AG04449 (cell line): ENCODE measurements at regions of chr3 and their contacts with region 1.

Region 1: DNA sequence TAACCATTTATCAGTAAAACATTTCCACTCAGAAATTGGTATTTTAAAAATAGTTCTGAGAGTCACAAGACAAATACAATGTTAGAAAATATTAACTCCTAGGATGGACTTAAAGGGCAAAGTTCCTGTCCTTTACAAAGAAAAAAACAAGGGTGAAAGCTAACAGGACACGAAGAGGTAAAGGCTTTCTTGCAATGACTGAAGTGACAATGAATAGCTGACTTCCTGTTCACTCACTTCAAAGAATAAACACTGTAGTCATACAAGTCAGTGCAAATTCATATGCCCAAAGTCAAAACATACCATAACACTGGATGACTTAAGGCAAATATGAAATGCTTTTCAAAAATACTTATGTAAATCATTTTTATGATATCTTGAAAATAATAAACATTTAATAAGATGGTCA is 1389.8 kb upstream of the ALCAM start:
- DNase-seq: no peak
- H3K4me3 ChIP-seq: no peak overlapping the region
- CTCF ChIP-seq: no peak

Region 2: DNA sequence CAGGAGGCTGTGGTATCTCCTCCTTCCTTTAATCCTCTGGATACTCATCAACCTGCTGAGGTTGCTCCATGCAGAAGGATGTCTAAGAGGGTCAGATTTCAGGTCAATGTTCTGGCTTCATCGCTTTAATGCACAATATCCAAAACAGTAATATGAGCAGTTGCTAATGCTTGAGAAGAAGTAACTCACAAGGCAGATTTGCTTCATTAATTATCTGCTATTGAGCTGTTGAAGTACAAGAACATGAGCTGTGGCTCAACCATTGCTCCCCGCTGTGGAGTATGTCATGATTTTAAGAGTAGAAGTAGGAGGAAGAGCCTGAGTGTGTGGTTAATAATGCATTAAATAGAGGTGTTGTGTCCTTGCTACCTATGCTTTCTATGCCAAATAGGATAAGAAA is 23.1 kb before region 1 on chr3:
- CTCF ChIA-PET with region 1: no interaction called
- POLR2A ChIA-PET with region 1: no interaction called
- DNase-seq: no peak
- H3K4me3 ChIP-seq: no peak overlapping the region
- CTCF ChIP-seq: no peak

Region 3: GRCh38 chr3:103991461-103992115 is 14.7 kb after region 1 on chr3:
- CTCF ChIA-PET with region 1: interaction called, 13 read pairs
- POLR2A ChIA-PET with region 1: no interaction called
- DNase-seq: peak; percentile 2
- H3K4me3 ChIP-seq: no peak overlapping the region
- CTCF ChIP-seq: peak; percentile 45

Region 4: GRCh38 chr3:104245261-104245660 is 268.3 kb after region 1 on chr3:
- CTCF ChIA-PET with region 1: no interaction called
- POLR2A ChIA-PET with region 1: no interaction called
- DNase-seq: no peak
- H3K4me3 ChIP-seq: no peak overlapping the region
- CTCF ChIP-seq: no peak